ENCODE measurements at regions of chr3 and their contacts with region 1.

Region 1: DNA sequence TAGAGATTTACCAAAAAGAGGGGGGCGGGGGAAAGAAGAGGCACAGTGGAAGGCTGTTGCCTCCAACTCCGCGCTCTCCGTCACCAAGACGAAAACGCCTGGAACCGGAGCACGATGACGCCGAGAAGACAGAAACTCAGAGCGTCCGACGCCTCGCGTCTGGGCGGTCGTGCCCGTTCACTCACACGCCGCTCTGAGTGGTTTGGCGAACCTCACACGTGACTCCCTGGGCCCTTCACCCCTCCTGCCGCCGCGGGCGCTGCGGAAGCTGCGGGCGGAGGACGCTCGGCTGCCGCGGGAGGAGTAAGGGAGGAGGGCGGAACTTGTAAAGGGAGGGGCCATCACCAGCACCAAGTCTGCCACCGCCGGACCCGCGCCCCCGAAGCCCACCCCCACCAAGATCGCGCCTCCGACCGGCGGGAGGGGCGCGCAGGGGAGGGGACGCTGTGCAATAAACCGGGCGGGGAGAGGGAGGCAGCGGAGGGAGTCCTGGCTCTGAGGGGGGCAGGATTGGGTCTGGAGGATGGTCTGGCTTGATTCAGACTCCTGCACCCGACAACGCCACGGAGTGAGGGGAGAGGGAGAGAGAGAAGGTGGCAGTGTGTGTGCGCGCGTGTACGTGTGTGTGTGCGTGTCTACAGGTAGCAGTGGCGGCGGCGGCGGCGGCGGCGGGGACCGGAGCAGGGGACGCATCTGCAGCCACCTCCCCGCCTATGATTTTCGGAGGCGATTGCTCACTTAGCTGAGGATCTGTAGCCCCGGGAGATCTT is 1.9 kb upstream of the NLGN1 start:
- DNase-seq: peak; percentile 75
- H3K4me3 ChIP-seq: peak overlapping the region; percentile 43 to 78 (median 48)
- H3K27ac ChIP-seq: peak overlapping the region; percentile 76 to 85 (median 82)
- H3K4me1 ChIP-seq: peaks cover 0 to 37% (median 8%) of the 10 kb centered on the region in 4 donors
- H3K27me3 ChIP-seq: peaks cover 67% of the 10 kb centered on the region
- CTCF ChIP-seq: no peak
- EP300 ChIP-seq: no peak
- POLR2A ChIP-seq: peak; percentile 44

Region 2: DNA sequence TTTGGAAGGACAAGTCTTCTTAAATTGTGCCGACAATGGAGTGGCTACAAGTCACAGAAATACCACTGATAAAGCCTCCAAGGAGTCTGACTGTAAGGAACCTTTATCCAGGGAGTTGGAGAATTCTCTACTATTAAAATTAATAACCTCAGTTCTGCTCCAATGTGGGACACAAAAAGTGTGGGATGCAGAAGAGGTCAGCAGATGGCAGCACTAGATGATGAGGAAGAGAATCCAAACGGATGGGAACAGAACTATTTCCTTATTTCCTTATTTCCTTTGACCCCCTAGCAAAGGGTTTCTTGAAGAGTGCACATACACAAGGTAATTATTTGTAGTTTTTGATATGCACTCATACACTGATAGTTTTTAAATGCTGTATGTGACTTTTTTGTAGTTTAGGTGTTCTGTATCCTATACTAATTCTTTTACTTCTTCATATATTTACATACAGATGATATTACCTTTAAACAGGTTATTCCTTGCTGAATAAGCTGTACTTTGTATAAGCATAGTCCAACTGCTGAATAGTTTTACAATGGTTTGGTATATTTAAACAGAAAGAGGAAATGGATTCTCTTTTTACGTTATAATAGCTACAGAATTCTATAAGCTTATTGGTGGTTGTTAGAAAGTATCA is 23.6 kb before region 1 on chr3:
- in situ Hi-C with region 1: no loop called
- intact Hi-C with region 1: loop called (anchors 2 kb)
- DNase-seq: no peak
- H3K4me3 ChIP-seq: no peak overlapping the region
- H3K27ac ChIP-seq: no peak overlapping the region
- H3K4me1 ChIP-seq: no peaks in the 10 kb centered on the region
- H3K27me3 ChIP-seq: no peaks in the 10 kb centered on the region
- CTCF ChIP-seq: peak in 4 of 5 experiments; percentile 28 to 50 (median 42)
- EP300 ChIP-seq: no peak
- POLR2A ChIP-seq: no peak

Region 3: DNA sequence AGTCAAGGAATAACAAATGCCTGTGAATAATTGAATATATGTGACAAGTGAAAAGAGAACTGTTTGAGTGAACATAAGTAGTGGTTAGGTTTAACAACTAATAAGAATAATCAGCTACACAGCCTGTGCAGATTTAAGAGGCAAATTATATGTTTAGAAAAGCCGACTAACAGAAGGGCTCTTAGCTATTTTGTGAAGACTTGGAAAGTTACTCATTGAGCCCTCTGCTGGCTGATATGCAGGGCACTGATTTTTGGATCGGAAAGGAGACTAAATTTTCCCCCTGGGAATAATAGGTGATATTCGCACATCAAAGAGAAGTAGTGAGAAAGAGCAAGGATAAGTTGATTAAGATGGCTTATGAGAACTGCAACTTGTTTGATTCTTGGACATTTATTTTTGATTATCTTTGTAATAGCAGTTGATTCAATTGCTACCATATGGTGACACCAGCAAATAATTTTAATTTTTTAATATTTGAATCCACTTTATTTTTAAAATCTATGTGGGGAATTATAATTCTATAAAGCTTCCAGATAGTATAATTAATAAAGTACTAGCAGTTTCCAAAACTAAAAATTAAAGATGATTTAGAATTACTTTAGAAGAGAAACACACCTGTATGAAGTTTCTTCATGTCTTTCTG is 158.2 kb after region 1 on chr3:
- in situ Hi-C with region 1: loop called in 1 of 4 experiments (anchors 25 kb)
- intact Hi-C with region 1: no loop called
- DNase-seq: no peak
- H3K4me3 ChIP-seq: no peak overlapping the region
- H3K27ac ChIP-seq: no peak overlapping the region
- H3K4me1 ChIP-seq: no peaks in the 10 kb centered on the region
- H3K27me3 ChIP-seq: no peaks in the 10 kb centered on the region
- CTCF ChIP-seq: peak; percentile 34 to 58 (median 46)
- EP300 ChIP-seq: no peak
- POLR2A ChIP-seq: no peak

Measured in transverse colon (tissue), 4 donors.